Aorta (tissue), 5 donors: ENCODE measurements at regions of chr13 and their contacts with region 1.

Region 1: GRCh38 chr13:22091222-22091970 is 420.5 kb downstream of the FGF9 start:
- DNase-seq: peak in 1 of 2 donors; percentile 67
- ATAC-seq: peak; percentile 60
- H3K4me3 ChIP-seq: no peak overlapping the region
- H3K27ac ChIP-seq: no peak overlapping the region
- H3K4me1 ChIP-seq: peaks cover 3 to 10% of the 10 kb centered on the region in 2 donors
- H3K27me3 ChIP-seq: no peaks in the 10 kb centered on the region

Region 2: GRCh38 chr13:21657538-21657937 is 433.9 kb before region 1 on chr13:
- intact Hi-C with region 1: no loop called
- DNase-seq: no peak
- ATAC-seq: no peak
- H3K4me3 ChIP-seq: no peak overlapping the region
- H3K27ac ChIP-seq: no peak overlapping the region
- H3K4me1 ChIP-seq: no peaks in the 10 kb centered on the region
- H3K27me3 ChIP-seq: peaks cover 0 to 1% of the 10 kb centered on the region in 2 donors

Region 3: DNA sequence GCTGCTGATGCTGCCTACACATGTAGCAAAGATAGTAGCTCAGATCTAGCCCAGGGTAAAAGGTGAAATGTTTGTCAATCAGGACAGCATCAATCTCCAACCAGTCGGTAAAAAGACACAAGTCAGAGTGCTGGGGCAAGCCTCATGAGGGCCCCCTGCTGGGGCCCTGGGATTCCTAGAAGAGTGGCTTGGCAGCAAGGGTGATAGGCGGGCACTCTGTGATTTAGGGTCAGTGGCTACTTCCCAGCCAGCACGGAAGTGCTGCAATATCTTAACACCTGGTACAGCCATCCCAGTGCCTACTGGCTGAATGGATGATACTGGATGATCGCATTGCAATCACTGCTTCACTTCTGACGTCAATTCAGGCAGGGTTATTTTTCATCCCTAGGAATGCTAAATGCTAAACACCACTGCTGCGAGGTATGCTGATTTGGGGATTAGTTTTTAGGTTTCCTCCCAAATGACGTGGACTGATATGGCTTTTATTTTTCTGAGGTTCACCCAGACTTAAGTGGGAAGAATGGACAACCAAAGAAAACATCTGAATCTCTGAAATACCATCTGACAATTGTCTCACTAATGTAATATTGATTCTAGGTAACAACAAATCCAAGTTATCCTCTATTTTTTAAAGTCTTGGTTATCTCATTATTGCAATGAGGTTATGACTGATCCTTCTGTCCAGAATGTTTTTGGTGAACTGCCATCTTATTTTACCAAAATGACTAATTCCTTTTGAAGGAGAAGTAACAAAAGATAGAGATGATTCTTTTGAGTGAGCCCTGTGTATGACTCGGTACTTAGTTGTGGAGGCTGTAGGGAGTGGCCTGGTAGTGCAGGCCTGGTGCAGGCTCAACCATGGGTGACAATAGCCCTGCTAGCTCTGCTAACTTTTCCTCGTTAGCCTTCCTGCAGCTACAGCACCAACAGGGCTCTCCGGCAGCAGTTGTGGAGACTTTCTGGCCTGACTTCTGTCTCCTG is 11.9 kb after region 1 on chr13:
- intact Hi-C with region 1: loop called in 1 of 2 experiments (anchors 2 kb)
- DNase-seq: no peak
- ATAC-seq: no peak
- H3K4me3 ChIP-seq: no peak overlapping the region
- H3K27ac ChIP-seq: no peak overlapping the region
- H3K4me1 ChIP-seq: no peaks in the 10 kb centered on the region
- H3K27me3 ChIP-seq: no peaks in the 10 kb centered on the region